CD8-positive, alpha-beta T cell (primary cell): ENCODE measurements at regions of chr6 and their contacts with region 1.

Region 1: DNA sequence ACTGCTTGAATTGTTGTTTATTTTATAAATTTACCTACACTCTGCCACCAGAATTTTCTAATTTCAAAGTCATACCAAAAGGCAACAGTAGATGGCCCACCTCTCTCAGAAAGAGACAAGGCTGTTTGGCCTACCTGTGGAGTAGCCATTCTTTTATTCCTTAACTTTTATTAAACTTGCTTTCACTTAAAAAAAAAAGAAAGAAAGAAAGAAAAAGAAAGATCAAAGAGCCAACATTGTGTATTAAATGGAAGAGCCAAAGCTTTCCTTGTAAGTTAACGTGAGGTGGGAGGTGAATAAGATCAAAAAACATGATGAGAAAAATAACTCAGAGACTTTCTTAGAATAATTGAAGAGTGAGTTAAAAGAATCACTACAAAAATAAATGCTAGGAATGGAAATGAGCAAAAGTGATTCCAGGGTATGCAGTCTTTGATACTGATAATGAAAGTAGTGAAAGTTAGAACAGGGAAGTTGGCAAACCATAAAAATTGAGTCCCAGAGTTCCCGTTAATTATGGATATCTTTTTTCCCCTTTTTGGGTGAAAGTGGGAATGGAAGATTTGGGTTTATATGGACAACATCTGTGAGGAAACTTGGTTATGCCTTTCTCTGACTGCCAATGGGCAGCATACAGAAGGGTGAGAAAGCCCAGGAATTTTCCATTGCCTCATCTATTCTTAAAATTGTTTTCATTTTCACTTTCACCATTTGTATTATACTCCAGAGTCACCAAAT is 35.9 kb upstream of the MYB start:
- DNase-seq: peak in 2 of 9 experiments; percentile 51 to 65
- ATAC-seq: peak; percentile 79
- H3K4me3 ChIP-seq: no peak overlapping the region
- H3K4me3 Mint-ChIP-seq: peak overlapping the region; percentile 32
- H3K27ac ChIP-seq: peak overlapping the region in 1 of 2 experiments; percentile 9
- H3K27ac Mint-ChIP-seq: peak overlapping the region; percentile 58
- H3K4me1 ChIP-seq: peaks cover 14% of the 10 kb centered on the region
- H3K4me1 Mint-ChIP-seq: peaks cover 39% of the 10 kb centered on the region
- H3K27me3 ChIP-seq: no peaks in the 10 kb centered on the region
- H3K27me3 Mint-ChIP-seq: no peaks in the 10 kb centered on the region
- CTCF ChIP-seq: peak; percentile 81

Region 2: GRCh38 chr6:135088818-135089809 is 56.1 kb before region 1 on chr6:
- CTCF ChIA-PET with region 1: interaction called, 16 read pairs
- POLR2A ChIA-PET with region 1: interaction called, 3 read pairs
- intact Hi-C with region 1: loop called in 1 of 2 experiments (anchors 2 kb)
- DNase-seq: peak in 3 of 9 experiments; percentile 22 to 64 (median 57)
- ATAC-seq: peak; percentile 67
- H3K4me3 ChIP-seq: peak overlapping the region in 1 of 2 experiments; percentile 48
- H3K4me3 Mint-ChIP-seq: peak overlapping the region; percentile 73
- H3K27ac ChIP-seq: no peak overlapping the region
- H3K27ac Mint-ChIP-seq: peak overlapping the region; percentile 87
- H3K4me1 ChIP-seq: peaks cover 70% of the 10 kb centered on the region
- H3K4me1 Mint-ChIP-seq: peaks cover 79% of the 10 kb centered on the region
- H3K27me3 ChIP-seq: no peaks in the 10 kb centered on the region
- H3K27me3 Mint-ChIP-seq: no peaks in the 10 kb centered on the region
- CTCF ChIP-seq: peak; percentile 58

Region 3: DNA sequence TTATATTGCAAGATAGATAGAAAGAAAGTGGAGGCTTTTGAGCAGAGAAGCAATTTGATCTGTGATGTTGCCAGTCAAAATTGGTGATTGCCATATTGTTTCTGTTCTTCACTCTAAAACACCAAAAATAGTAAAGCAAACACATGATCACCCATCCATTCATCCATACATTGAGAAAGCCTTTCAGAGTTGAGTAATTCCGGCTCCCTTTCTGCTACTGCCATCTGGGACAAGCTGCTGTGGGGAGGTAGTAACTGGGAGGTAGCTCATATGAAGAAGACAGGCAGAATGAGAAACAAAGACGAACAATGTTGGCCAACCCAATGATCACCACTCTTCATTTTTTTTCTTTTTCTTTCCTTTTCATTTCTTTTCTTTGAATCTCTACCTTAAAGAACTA is 39.5 kb before region 1 on chr6:
- CTCF ChIA-PET with region 1: interaction called, 27 read pairs
- POLR2A ChIA-PET with region 1: interaction called, 4 read pairs
- intact Hi-C with region 1: no loop called
- DNase-seq: no peak
- ATAC-seq: no peak
- H3K4me3 ChIP-seq: no peak overlapping the region
- H3K4me3 Mint-ChIP-seq: no peak overlapping the region
- H3K27ac ChIP-seq: no peak overlapping the region
- H3K27ac Mint-ChIP-seq: peak overlapping the region; percentile 86
- H3K4me1 ChIP-seq: peaks cover 39% of the 10 kb centered on the region
- H3K4me1 Mint-ChIP-seq: peaks cover 64% of the 10 kb centered on the region
- H3K27me3 ChIP-seq: no peaks in the 10 kb centered on the region
- H3K27me3 Mint-ChIP-seq: no peaks in the 10 kb centered on the region
- CTCF ChIP-seq: no peak

Region 4: DNA sequence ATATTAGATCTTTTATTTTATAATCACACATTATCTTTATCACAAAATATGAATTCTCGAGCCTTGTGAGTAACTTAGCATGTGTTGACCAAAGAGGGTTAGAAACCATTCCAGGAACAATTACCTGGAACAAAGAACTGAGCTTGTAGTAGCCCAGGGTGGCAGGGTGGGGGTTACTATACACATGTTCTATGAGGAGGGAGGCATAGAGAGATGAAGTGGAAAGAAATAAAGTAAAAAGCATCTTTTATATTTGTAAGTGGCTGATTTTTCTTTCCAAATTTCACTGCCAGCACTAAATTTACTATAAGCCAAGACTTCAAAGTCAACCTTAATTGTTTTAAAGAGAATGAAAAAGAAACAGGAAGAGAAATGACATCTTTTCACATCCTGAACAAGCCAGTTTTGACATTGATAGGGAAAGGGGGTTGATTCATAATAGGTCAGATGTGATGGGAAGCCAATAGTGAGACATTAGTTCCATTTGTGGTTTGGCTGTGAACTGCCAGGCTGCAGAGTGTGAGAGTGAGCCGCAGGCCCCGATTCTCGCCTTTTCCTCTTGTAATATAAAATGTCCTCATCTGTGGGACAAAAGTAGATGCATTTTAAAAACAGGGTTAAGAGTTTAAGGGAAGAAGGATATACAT is 16.8 kb before region 1 on chr6:
- CTCF ChIA-PET with region 1: interaction called, 36 read pairs
- POLR2A ChIA-PET with region 1: interaction called, 5 read pairs
- intact Hi-C with region 1: loop called in 1 of 2 experiments (anchors 2 kb)
- DNase-seq: peak in 7 of 9 experiments; percentile 36 to 89 (median 54)
- ATAC-seq: peak; percentile 92
- H3K4me3 ChIP-seq: peak overlapping the region in 1 of 2 experiments; percentile 9
- H3K4me3 Mint-ChIP-seq: peak overlapping the region; percentile 59
- H3K27ac ChIP-seq: peak overlapping the region; percentile 25 to 81
- H3K27ac Mint-ChIP-seq: peak overlapping the region; percentile 95
- H3K4me1 ChIP-seq: peaks cover 25% of the 10 kb centered on the region
- H3K4me1 Mint-ChIP-seq: peaks cover 42% of the 10 kb centered on the region
- H3K27me3 ChIP-seq: no peaks in the 10 kb centered on the region
- H3K27me3 Mint-ChIP-seq: no peaks in the 10 kb centered on the region
- CTCF ChIP-seq: no peak

Region 5: GRCh38 chr6:135257631-135258405 is 112.6 kb after region 1 on chr6:
- CTCF ChIA-PET with region 1: interaction called, 5 read pairs
- POLR2A ChIA-PET with region 1: no interaction called
- intact Hi-C with region 1: loop called in 1 of 2 experiments (anchors 1 kb)
- DNase-seq: peak in 1 of 9 experiments; percentile 8
- ATAC-seq: no peak
- H3K4me3 ChIP-seq: no peak overlapping the region
- H3K4me3 Mint-ChIP-seq: no peak overlapping the region
- H3K27ac ChIP-seq: no peak overlapping the region
- H3K27ac Mint-ChIP-seq: no peak overlapping the region
- H3K4me1 ChIP-seq: no peaks in the 10 kb centered on the region
- H3K4me1 Mint-ChIP-seq: no peaks in the 10 kb centered on the region
- H3K27me3 ChIP-seq: no peaks in the 10 kb centered on the region
- H3K27me3 Mint-ChIP-seq: no peaks in the 10 kb centered on the region
- CTCF ChIP-seq: no peak

Region 6: DNA sequence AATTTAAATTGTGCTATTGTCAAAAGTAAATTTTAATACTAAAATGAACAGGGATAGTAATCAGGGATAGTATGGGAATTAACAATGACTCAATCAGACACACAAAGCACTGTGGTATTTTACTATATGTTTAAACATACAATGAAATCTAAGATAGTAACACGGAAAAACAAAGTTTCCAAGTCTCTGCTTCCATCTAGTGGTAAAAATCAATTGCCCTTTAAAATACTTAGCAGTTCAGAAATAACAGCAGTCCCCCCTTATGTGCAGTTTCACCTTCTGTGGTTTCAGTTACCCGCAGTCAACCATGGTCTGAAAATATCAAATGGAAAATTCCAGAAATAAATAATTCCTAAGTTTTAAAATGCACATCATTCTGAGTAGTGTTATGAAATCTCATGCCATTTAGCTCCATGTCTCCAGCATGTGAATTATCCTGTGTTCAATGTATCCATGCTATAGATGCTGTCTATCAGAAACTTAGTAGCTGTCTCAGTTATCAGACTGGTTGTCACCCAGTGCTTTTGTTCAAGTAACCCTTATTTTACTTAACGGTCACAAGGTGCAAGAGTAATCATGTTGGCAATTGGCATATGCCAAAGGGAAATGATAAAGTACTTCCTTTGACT is 293.8 kb after region 1 on chr6:
- CTCF ChIA-PET with region 1: interaction called, 3 read pairs
- POLR2A ChIA-PET with region 1: no interaction called
- intact Hi-C with region 1: loop called in 1 of 2 experiments (anchors 5 kb)
- DNase-seq: peak in 2 of 9 experiments; percentile 36 to 53
- ATAC-seq: peak; percentile 42
- H3K4me3 ChIP-seq: no peak overlapping the region
- H3K4me3 Mint-ChIP-seq: no peak overlapping the region
- H3K27ac ChIP-seq: no peak overlapping the region
- H3K27ac Mint-ChIP-seq: no peak overlapping the region
- H3K4me1 ChIP-seq: peaks cover 5% of the 10 kb centered on the region
- H3K4me1 Mint-ChIP-seq: peaks cover 18% of the 10 kb centered on the region
- H3K27me3 ChIP-seq: no peaks in the 10 kb centered on the region
- H3K27me3 Mint-ChIP-seq: no peaks in the 10 kb centered on the region
- CTCF ChIP-seq: peak; percentile 47

Region 7: DNA sequence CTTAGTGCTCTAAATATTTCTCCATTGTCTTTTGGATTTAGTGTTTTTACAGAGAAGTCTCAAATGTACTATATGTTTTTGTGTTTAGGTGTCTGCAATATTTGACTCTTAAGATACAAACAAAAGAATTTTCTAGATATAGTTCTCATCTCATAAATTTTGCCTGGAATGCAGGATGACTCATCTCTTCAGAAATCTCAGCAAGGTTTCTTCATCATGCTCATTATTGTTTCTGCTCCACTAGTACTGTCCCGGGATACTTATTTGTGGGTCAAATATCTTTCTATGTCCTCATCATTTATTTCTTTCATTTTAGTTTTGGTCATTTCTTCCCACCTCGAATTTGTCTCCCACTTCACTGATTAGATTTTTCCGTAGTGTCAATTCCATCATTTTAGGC is 342.8 kb after region 1 on chr6:
- CTCF ChIA-PET with region 1: no interaction called
- POLR2A ChIA-PET with region 1: no interaction called
- intact Hi-C with region 1: no loop called
- DNase-seq: no peak
- ATAC-seq: no peak
- H3K4me3 ChIP-seq: no peak overlapping the region
- H3K4me3 Mint-ChIP-seq: no peak overlapping the region
- H3K27ac ChIP-seq: no peak overlapping the region
- H3K27ac Mint-ChIP-seq: no peak overlapping the region
- H3K4me1 ChIP-seq: no peaks in the 10 kb centered on the region
- H3K4me1 Mint-ChIP-seq: no peaks in the 10 kb centered on the region
- H3K27me3 ChIP-seq: no peaks in the 10 kb centered on the region
- H3K27me3 Mint-ChIP-seq: no peaks in the 10 kb centered on the region
- CTCF ChIP-seq: no peak